ENCODE measurements at regions of chr12 and their contacts with region 1.

Region 1: GRCh38 chr12:31959161-31959700 is at the start of gene RESF1:
- DNase-seq: peak; percentile 57
- ATAC-seq: peak; percentile 92
- H3K4me3 ChIP-seq: peak within 1 kb of the TSS; percentile 86
- H3K27ac ChIP-seq: peak within 1 kb of the TSS; percentile 76
- H3K4me1 ChIP-seq: peaks cover 12% of the 10 kb centered on the region; the same call in 1 of the 2 replicates
- H3K27me3 ChIP-seq: no peaks in the 10 kb centered on the region
- CTCF ChIP-seq: no peak
- EP300 ChIP-seq: no peak
- POLR2A ChIP-seq: peak; percentile 81
- RAD21 ChIP-seq: no peak
- polyA plus RNA-seq, gene RESF1: 18.9 to 23.6 TPM

Region 2: DNA sequence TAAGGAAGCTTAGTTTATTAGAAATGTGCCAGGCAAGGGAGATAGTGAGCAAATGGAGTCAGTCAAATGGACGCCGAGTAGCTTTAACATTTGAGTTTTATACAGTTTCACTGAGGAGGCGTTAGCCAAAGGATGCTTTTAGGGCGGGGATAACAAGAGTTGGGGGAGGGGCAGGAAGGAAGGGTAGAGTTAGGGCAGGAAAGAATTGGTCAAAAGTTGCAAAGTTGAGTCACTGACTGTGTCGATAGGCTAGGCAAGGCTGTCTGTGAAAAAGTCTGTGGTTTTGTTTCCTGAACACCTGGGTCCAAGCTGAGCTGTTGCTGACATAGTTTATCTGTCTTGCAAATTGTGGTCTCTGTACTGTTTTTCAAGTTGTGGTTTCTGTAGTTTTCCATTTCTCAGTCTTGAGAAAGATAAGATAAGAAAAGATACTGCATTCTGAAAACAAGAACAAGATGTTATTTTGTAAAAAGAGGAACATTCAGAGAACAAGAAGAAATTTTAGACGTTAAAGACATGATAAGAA is 62.7 kb before region 1 on chr12:
- CTCF ChIA-PET with region 1: interaction called, 3 read pairs
- POLR2A ChIA-PET with region 1: no interaction called
- RAD21 ChIA-PET with region 1: interaction called, 14 read pairs
- SMC1A ChIA-PET with region 1: interaction called, 4 read pairs
- in situ Hi-C with region 1: no loop called
- intact Hi-C with region 1: loop called (anchors 1 kb)
- DNase-seq: peak; percentile 99
- ATAC-seq: peak; percentile 99
- H3K4me3 ChIP-seq: no peak overlapping the region
- H3K27ac ChIP-seq: peak overlapping the region; percentile 98
- H3K4me1 ChIP-seq: peaks cover 21% of the 10 kb centered on the region
- H3K27me3 ChIP-seq: no peaks in the 10 kb centered on the region
- CTCF ChIP-seq: no peak
- EP300 ChIP-seq: peak; percentile 95
- POLR2A ChIP-seq: peak; percentile 62
- RAD21 ChIP-seq: 0 out of 2 replicates have a peak, but pooled peaks have one; percentile 14

Region 3: DNA sequence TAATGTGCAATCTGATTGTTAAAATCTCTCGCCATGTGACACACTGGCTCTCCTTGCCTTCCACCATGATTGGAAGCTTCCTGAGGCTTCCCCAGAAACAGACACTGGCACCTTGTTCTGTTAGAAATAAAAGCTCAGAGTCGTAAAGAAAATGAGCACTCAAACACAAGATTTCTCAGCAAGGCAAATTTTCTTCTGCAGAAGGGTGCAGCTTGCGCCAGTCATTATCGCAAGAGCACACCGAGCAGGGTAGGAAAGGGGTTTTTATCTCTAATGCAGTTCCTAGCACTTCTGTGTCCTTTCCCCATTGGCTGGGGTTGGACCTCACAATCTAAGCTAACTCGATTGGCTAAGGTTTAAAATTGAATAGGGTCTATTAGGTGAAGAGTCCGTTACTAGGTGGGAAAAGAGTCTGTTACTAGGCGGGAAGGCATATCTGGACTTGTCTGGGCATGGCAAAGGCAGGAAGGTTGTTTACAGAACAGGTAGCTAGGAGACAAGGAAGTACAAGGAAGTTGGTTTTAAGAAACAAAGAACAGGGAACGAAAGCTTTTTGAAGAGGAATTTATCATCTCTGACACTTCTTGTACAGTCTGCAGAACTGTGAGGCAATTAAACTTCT is 84.8 kb after region 1 on chr12:
- CTCF ChIA-PET with region 1: no interaction called
- POLR2A ChIA-PET with region 1: no interaction called
- RAD21 ChIA-PET with region 1: no interaction called
- SMC1A ChIA-PET with region 1: no interaction called
- in situ Hi-C with region 1: no loop called
- intact Hi-C with region 1: no loop called
- DNase-seq: no peak
- ATAC-seq: no peak
- H3K4me3 ChIP-seq: no peak overlapping the region
- H3K27ac ChIP-seq: no peak overlapping the region
- H3K4me1 ChIP-seq: no peaks in the 10 kb centered on the region
- H3K27me3 ChIP-seq: no peaks in the 10 kb centered on the region
- CTCF ChIP-seq: no peak
- EP300 ChIP-seq: no peak
- POLR2A ChIP-seq: no peak
- RAD21 ChIP-seq: no peak

Region 4: DNA sequence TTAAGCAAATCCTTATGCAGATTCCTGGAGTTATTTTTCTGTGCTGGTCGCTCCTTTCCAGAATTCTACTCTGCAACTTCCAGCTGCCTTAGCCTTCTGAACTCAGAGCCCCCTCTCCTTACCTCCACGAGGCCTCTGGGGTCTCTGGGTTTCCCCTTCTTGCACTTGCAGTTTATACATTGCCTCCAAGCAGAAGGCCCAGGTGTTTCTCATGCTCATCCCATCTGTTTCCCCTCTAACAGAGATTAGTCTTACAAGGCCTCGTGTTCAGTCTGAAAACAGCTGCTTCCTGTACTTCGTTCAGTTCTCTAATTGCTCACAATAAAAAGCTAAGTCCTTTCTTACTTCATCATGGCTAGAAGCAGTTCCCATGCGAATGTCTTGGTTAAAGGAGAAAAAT is 305.7 kb after region 1 on chr12:
- CTCF ChIA-PET with region 1: no interaction called
- POLR2A ChIA-PET with region 1: no interaction called
- RAD21 ChIA-PET with region 1: no interaction called
- SMC1A ChIA-PET with region 1: no interaction called
- in situ Hi-C with region 1: no loop called
- intact Hi-C with region 1: loop called (anchors 10 kb)
- DNase-seq: no peak
- ATAC-seq: peak; percentile 50
- H3K4me3 ChIP-seq: no peak overlapping the region
- H3K27ac ChIP-seq: peak overlapping the region; percentile 64
- H3K4me1 ChIP-seq: peaks cover 11% of the 10 kb centered on the region
- H3K27me3 ChIP-seq: no peaks in the 10 kb centered on the region
- CTCF ChIP-seq: no peak
- EP300 ChIP-seq: no peak
- POLR2A ChIP-seq: no peak
- RAD21 ChIP-seq: no peak

Measured in GM12878 (cell line).